HEK293 (cell line): ENCODE measurements at regions of chr17 and their contacts with region 1.

Region 1: DNA sequence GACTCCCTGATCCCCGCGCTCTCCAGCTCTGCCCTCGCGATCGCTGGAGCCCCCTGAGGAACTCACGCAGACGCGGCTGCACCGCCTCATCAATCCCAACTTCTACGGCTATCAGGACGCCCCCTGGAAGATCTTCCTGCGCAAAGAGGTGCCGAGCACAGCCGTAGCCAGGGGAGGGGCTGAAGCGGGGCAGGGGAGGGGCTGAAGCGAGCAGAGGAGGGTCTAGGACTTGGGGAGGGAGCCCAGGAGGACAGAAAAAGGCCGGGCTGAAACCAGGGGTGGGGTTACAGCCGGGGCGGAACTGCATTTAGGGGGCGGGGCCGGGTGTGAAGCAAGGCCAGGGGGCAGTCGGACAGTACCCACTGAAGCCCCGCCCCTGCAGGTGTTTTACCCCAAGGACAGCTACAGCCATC is 29.9 kb upstream of the ALKBH5 start:
- H3K4me3 ChIP-seq: peak overlapping the region; percentile 24
- H3K27ac ChIP-seq: no peak overlapping the region
- H3K4me1 ChIP-seq: no peaks in the 10 kb centered on the region
- CTCF ChIP-seq: no peak

Region 2: DNA sequence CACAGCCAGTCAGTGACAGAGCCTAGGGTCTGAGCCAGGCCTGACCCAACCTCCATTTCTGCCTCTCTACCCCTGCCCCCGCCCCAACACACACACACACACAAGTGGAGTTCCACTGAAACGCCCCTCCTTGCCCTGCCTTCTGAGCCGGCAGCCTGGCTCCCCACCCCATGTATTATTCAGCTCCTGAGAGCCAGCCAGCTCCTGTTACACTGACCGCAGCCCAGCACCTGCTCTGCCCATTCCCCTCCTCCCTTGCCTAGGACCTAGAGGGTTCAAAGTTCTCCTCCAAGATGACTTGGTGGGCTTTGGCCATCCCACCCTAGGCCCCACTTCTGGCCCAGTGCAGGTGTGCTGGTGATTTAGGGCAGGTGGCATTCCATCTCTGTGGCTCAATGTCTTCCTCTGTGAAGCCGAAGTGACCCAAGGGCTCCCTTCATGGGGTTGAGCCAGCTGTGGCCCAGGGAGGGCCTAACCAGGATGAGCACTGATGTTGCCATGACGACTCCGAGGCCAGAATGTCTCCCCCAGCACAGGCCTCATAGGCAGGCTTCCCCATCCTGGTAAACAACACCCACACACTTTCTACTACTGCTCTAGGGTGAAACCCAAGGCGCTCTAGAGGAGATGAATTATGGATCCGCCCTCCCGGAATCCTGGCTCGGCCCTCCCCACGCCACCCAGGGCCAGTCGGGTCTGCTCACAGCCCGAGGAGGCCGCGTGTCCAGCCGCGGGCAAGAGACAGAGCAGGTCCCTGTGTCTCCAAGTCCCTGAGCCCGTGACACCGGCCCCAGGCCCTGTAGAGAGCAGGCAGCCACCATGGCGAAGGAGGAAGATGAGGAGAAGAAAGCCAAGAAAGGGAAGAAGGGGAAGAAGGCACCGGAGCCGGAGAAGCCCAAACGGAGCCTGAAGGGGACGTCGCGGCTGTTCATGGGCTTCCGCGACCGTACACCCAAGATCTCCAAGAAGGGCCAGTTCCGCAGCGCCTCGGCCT is 35.5 kb before region 1 on chr17:
- CTCF ChIA-PET with region 1: no interaction called
- POLR2A ChIA-PET with region 1: no interaction called
- H3K4me3 ChIP-seq: no peak overlapping the region
- H3K27ac ChIP-seq: no peak overlapping the region; the same call in 1 of the 2 replicates
- H3K4me1 ChIP-seq: no peaks in the 10 kb centered on the region
- CTCF ChIP-seq: no peak

Region 3: GRCh38 chr17:18141210-18141803 is 12.4 kb before region 1 on chr17:
- CTCF ChIA-PET with region 1: interaction called, 32 read pairs
- POLR2A ChIA-PET with region 1: interaction called, 3 read pairs
- H3K4me3 ChIP-seq: no peak overlapping the region
- H3K27ac ChIP-seq: no peak overlapping the region
- H3K4me1 ChIP-seq: no peaks in the 10 kb centered on the region
- CTCF ChIP-seq: peak; percentile 31; the same call in 1 of the 2 replicates